Aorta (tissue), 5 donors: ENCODE measurements at regions of chr13 and their contacts with region 1.

Region 1: DNA sequence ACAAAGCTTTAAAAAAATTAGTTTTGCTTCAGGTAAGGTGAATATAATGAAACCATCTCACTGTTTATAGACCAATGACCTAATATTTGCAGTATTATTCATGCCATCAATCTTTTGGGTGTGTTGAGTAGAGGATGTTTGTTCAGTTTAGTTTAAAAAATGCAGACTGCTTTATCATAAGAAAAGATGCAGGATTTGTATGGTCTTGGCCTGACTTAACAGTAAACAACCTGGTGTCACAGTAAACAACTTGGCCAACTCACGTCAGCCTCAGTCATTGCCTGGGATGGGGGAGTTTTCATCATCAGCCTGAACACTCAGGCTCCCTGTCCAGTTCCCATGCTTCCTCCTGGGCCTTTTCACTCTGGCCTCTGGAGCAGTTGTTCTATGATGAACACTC is 55.1 kb downstream of the LMO7 start:
- DNase-seq: no peak
- ATAC-seq: no peak
- H3K4me3 ChIP-seq: no peak overlapping the region
- H3K27ac ChIP-seq: no peak overlapping the region
- H3K4me1 ChIP-seq: no peaks in the 10 kb centered on the region
- H3K27me3 ChIP-seq: no peaks in the 10 kb centered on the region

Region 2: DNA sequence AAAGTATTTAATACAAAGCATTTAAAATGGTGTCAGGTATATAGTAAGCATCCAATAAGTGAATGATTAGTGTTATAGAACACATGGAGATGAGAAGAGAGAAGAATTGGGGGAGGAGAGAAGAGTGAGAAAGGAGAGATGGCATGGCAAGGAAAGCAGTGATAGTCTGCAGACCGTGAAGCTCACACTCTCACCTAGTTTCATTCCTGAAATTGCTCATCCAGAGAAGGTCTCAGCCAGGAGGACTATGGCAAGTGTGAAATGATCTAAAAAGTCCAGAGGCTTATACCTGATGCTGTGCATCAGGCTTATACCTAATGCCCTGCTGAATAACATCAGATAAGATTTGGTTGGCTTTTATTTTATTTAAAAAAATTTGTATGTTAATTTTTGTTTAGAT is 1205.4 kb before region 1 on chr13:
- intact Hi-C with region 1: no loop called
- DNase-seq: no peak
- ATAC-seq: no peak
- H3K4me3 ChIP-seq: no peak overlapping the region
- H3K27ac ChIP-seq: no peak overlapping the region
- H3K4me1 ChIP-seq: no peaks in the 10 kb centered on the region
- H3K27me3 ChIP-seq: no peaks in the 10 kb centered on the region

Region 3: GRCh38 chr13:75803164-75803611 is 112.0 kb after region 1 on chr13:
- intact Hi-C with region 1: loop called in 1 of 2 experiments (anchors 5 kb)
- DNase-seq: no peak
- ATAC-seq: peak; percentile 4
- H3K4me3 ChIP-seq: no peak overlapping the region
- H3K27ac ChIP-seq: peak overlapping the region; percentile 85 to 95
- H3K4me1 ChIP-seq: peaks cover 2 to 5% of the 10 kb centered on the region in 2 donors
- H3K27me3 ChIP-seq: no peaks in the 10 kb centered on the region

Region 4: GRCh38 chr13:75812751-75813181 is 121.6 kb after region 1 on chr13:
- intact Hi-C with region 1: loop called (anchors 5 kb)
- DNase-seq: no peak
- ATAC-seq: peak; percentile 30
- H3K4me3 ChIP-seq: peak overlapping the region in 1 of 2 donors; percentile 48
- H3K27ac ChIP-seq: peak overlapping the region; percentile 50 to 57
- H3K4me1 ChIP-seq: peaks cover 7 to 16% of the 10 kb centered on the region in 2 donors
- H3K27me3 ChIP-seq: no peaks in the 10 kb centered on the region

Region 5: DNA sequence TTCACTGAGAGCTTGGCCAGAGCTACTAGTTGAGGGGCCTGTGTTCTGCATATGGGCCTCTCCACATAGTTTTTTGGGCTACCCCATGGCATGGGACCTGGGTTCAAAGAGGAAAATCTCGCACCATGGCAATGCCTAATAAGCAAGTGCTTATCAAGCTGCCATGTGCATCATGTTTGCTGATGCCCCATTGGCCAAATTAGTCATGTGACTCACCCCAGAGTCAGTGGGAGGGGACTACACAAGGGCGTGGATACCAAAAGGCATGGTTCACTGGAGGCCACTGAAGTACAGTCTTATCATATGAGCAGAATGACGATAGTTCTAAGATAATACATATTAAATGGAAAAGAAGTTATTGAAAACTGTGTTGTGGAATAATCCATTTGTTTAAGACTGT is 159.7 kb after region 1 on chr13:
- intact Hi-C with region 1: loop called in 1 of 2 experiments (anchors 10 kb)
- DNase-seq: no peak
- ATAC-seq: no peak
- H3K4me3 ChIP-seq: no peak overlapping the region
- H3K27ac ChIP-seq: no peak overlapping the region
- H3K4me1 ChIP-seq: no peaks in the 10 kb centered on the region
- H3K27me3 ChIP-seq: no peaks in the 10 kb centered on the region

Region 6: DNA sequence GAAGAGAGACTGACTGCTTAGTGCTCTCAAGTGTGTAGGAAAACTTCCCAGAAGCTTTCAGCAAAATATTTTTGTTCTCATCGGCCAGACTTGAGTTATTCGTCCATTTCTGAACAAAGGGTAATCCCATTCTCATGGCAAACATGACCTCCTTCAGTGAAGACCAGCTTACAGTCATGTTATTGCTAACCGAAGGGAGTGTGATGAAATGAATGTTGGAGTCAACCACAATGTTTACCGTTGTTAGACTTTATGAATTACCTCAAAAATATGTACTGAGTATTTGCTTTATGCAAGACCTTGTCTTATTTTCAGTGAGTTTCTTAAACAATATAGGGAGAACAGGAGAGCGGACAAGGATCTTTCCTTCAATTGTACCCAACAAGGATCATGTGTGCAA is 173.5 kb after region 1 on chr13:
- intact Hi-C with region 1: loop called (anchors 5 to 10 kb)
- DNase-seq: no peak
- ATAC-seq: no peak
- H3K4me3 ChIP-seq: no peak overlapping the region
- H3K27ac ChIP-seq: no peak overlapping the region
- H3K4me1 ChIP-seq: no peaks in the 10 kb centered on the region
- H3K27me3 ChIP-seq: no peaks in the 10 kb centered on the region

Region 7: DNA sequence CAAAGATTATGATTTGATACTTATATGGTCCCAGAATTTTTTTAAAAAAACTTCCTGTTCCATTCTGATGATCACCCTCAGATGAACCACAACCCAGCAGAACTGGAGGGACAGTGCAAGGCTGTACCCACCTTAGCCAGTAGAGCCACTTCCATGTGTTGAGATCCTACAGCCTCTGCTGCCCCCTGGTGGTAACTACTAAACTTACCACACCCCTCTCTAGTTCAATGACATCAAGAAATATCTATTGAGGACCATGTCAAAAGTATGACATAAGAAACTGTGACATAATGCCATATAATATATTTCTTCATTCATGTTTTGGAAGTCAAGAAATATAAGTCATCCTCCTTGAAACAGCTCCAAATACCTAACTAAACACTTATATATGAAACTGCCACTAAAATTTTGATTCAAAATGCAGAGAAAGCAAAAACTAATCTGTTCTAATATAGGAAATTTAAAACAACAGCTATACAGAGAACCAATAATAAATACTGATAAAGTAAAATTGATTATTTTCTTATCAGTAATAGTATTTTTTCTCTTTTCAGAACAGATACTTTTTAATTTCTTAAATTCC is 782.5 kb after region 1 on chr13:
- intact Hi-C with region 1: loop called (anchors 5 kb)
- DNase-seq: peak; percentile 70 to 74
- ATAC-seq: peak; percentile 95
- H3K4me3 ChIP-seq: no peak overlapping the region
- H3K27ac ChIP-seq: no peak overlapping the region
- H3K4me1 ChIP-seq: peaks cover 2% of the 10 kb centered on the region in 2 donors
- H3K27me3 ChIP-seq: no peaks in the 10 kb centered on the region

Region 8: GRCh38 chr13:76903544-76904162 is 1212.5 kb after region 1 on chr13:
- intact Hi-C with region 1: loop called in 1 of 2 experiments (anchors 10 kb)
- DNase-seq: peak in 1 of 2 donors; percentile 72
- ATAC-seq: peak; percentile 86
- H3K4me3 ChIP-seq: no peak overlapping the region
- H3K27ac ChIP-seq: no peak overlapping the region
- H3K4me1 ChIP-seq: no peaks in the 10 kb centered on the region
- H3K27me3 ChIP-seq: no peaks in the 10 kb centered on the region